ENCODE measurements at regions of chr14 and their contacts with region 1.

Region 1: DNA sequence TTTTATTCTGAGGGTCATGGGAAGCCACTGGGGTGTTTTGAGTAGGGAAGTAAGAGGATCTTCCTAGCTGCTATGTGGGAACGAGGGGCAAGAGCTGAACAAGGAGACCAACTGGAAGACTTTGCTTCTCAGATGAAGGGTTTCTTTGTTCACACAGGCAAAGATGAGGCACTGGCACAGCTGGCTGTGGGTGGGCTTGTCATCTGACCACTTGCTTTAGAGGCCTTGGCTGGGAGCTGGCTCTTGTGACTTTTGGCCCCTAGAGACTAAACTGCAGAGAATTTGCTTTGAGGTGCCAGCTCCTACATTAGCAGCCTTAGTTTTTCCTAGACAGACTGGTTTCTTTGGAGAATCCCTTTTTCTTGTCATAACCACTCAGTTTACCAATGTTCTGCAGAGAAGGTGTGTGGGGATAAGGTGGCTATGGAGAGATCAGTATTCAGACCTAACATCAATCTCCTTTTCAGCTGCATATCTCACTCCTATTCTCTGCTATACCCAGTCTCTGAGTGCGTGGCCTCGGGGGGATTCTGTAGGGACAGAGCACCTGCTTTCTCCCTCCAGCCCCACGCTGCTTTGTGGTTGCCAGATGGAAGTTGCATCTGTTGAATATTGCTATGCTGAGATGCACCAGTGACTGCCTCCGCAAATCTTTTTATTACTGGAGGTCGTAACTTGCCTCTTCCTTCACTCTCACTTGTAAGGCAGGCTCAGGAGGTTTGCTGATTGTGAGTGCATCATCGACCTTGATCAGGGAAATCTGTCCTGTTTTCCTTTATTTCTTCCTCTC is 12.7 kb downstream of the PPP2R5C start:
- DNase-seq: no peak
- H3K4me3 ChIP-seq: no peak overlapping the region
- H3K27ac ChIP-seq: no peak overlapping the region
- H3K4me1 ChIP-seq: no peaks in the 10 kb centered on the region
- H3K27me3 ChIP-seq: peaks cover 10 to 11% of the 10 kb centered on the region in 2 experiments
- CTCF ChIP-seq: no peak
- POLR2A ChIP-seq: no peak

Region 2: GRCh38 chr14:101665515-101666078 is 108.6 kb before region 1 on chr14:
- CTCF ChIA-PET with region 1: no interaction called
- POLR2A ChIA-PET with region 1: no interaction called
- dilution Hi-C with region 1: no loop called
- intact Hi-C with region 1: no loop called
- DNase-seq: peak; percentile 37
- H3K4me3 ChIP-seq: no peak overlapping the region
- H3K27ac ChIP-seq: no peak overlapping the region
- H3K4me1 ChIP-seq: no peaks in the 10 kb centered on the region
- H3K27me3 ChIP-seq: peaks cover 7 to 31% of the 10 kb centered on the region in 2 experiments
- CTCF ChIP-seq: peak; percentile 18 to 41
- POLR2A ChIP-seq: no peak

Region 3: DNA sequence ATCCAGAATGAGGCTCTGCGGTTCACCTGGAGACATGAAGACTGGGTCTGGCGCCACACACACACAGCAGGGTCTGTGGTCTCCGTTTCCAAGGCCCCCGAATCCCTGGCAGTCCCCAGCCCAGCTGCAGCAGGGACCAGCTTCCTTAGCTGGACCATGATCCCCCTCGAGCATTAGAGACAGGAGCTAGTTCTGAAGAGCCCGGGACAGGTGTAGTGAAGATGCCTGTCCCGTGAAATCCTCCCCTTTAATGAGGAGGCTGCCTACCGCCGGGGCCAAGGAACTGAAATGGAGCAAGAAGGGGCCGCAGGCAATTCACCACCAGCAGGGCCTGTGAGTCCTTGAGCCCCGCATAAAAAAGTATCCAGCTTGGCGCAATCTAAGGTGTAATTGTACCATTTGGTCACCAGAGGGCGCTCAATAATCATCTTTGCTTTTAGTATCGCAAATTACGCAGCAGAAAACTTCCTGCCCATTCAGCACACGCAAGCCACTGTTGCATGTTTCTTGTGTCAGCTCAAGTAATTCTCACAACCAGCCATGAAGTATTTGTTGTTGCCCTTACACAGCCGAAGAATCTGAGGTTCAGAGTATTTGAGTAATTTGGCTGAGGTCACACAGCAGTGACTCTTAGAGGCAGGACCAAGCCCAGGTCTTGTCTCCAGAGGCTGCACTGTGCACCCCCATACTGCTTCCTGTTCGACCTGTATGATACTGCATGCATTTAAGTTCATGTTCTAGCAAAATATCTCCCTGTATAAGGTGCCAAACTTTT is 66.9 kb before region 1 on chr14:
- CTCF ChIA-PET with region 1: interaction called, 52 read pairs
- POLR2A ChIA-PET with region 1: no interaction called
- dilution Hi-C with region 1: no loop called
- intact Hi-C with region 1: loop called (anchors 1 kb)
- DNase-seq: peak; percentile 82
- H3K4me3 ChIP-seq: no peak overlapping the region
- H3K27ac ChIP-seq: no peak overlapping the region
- H3K4me1 ChIP-seq: no peaks in the 10 kb centered on the region
- H3K27me3 ChIP-seq: peaks cover 20 to 41% of the 10 kb centered on the region in 2 experiments
- CTCF ChIP-seq: peak; percentile 67 to 75
- POLR2A ChIP-seq: no peak

Region 4: GRCh38 chr14:101791919-101792572 is 17.8 kb after region 1 on chr14:
- CTCF ChIA-PET with region 1: interaction called, 19 read pairs
- POLR2A ChIA-PET with region 1: no interaction called
- dilution Hi-C with region 1: no loop called
- intact Hi-C with region 1: no loop called
- DNase-seq: peak; percentile 63
- H3K4me3 ChIP-seq: peak overlapping the region in 2 of 3 experiments; percentile 32 to 63
- H3K27ac ChIP-seq: no peak overlapping the region
- H3K4me1 ChIP-seq: peaks cover 4% of the 10 kb centered on the region
- H3K27me3 ChIP-seq: peaks cover 3 to 8% of the 10 kb centered on the region in 2 experiments
- CTCF ChIP-seq: no peak
- POLR2A ChIP-seq: no peak

Region 5: GRCh38 chr14:101839236-101839635 is 65.0 kb after region 1 on chr14:
- CTCF ChIA-PET with region 1: interaction called, 10 read pairs
- POLR2A ChIA-PET with region 1: no interaction called
- dilution Hi-C with region 1: no loop called
- intact Hi-C with region 1: loop called (anchors 5 kb)
- DNase-seq: no peak
- H3K4me3 ChIP-seq: no peak overlapping the region
- H3K27ac ChIP-seq: no peak overlapping the region
- H3K4me1 ChIP-seq: peaks cover 6% of the 10 kb centered on the region
- H3K27me3 ChIP-seq: no peaks in the 10 kb centered on the region
- CTCF ChIP-seq: no peak
- POLR2A ChIP-seq: no peak

Region 6: GRCh38 chr14:101889898-101890297 is 115.7 kb after region 1 on chr14:
- CTCF ChIA-PET with region 1: interaction called, 66 read pairs
- POLR2A ChIA-PET with region 1: no interaction called
- dilution Hi-C with region 1: no loop called
- intact Hi-C with region 1: loop called (anchors 2 kb)
- DNase-seq: peak; percentile 6
- H3K4me3 ChIP-seq: no peak overlapping the region
- H3K27ac ChIP-seq: no peak overlapping the region
- H3K4me1 ChIP-seq: no peaks in the 10 kb centered on the region
- H3K27me3 ChIP-seq: no peaks in the 10 kb centered on the region
- CTCF ChIP-seq: no peak
- POLR2A ChIP-seq: no peak

Region 7: GRCh38 chr14:101933209-101933608 is 159.0 kb after region 1 on chr14:
- CTCF ChIA-PET with region 1: interaction called, 12 read pairs
- POLR2A ChIA-PET with region 1: no interaction called
- dilution Hi-C with region 1: no loop called
- intact Hi-C with region 1: no loop called
- DNase-seq: no peak
- H3K4me3 ChIP-seq: no peak overlapping the region
- H3K27ac ChIP-seq: no peak overlapping the region
- H3K4me1 ChIP-seq: no peaks in the 10 kb centered on the region
- H3K27me3 ChIP-seq: peaks cover 0 to 2% of the 10 kb centered on the region in 2 experiments
- CTCF ChIP-seq: no peak
- POLR2A ChIP-seq: no peak

Region 8: GRCh38 chr14:101964297-101965144 is 190.3 kb after region 1 on chr14 and contains the start of gene DYNC1H1:
- CTCF ChIA-PET with region 1: interaction called, 124 read pairs
- POLR2A ChIA-PET with region 1: no interaction called
- dilution Hi-C with region 1: no loop called
- intact Hi-C with region 1: loop called (anchors 1 kb)
- DNase-seq: peak; percentile 96
- H3K4me3 ChIP-seq: peak within 1 kb of the TSS; percentile 75 to 95 (median 90)
- H3K27ac ChIP-seq: peak within 1 kb of the TSS; percentile 64
- H3K4me1 ChIP-seq: peaks cover 14% of the 10 kb centered on the region
- H3K27me3 ChIP-seq: no peaks in the 10 kb centered on the region
- CTCF ChIP-seq: no peak
- POLR2A ChIP-seq: peak; percentile 93
- total RNA-seq, gene DYNC1H1: 596 and 648 TPM in 2 replicates

Measured in endothelial cell of umbilical vein (primary cell).